H1 (cell line): ENCODE measurements at regions of chr1 and their contacts with region 1.

Region 1: GRCh38 chr1:156226116-156226538 is 13.3 kb downstream of the PMF1 start:
- DNase-seq: no peak
- H3K4me3 ChIP-seq: no peak overlapping the region
- H3K27ac ChIP-seq: no peak overlapping the region
- H3K4me1 ChIP-seq: no peaks in the 10 kb centered on the region
- H3K27me3 ChIP-seq: no peaks in the 10 kb centered on the region
- CTCF ChIP-seq: no peak
- EP300 ChIP-seq: no peak
- POLR2A ChIP-seq: no peak
- RAD21 ChIP-seq: no peak

Region 2: DNA sequence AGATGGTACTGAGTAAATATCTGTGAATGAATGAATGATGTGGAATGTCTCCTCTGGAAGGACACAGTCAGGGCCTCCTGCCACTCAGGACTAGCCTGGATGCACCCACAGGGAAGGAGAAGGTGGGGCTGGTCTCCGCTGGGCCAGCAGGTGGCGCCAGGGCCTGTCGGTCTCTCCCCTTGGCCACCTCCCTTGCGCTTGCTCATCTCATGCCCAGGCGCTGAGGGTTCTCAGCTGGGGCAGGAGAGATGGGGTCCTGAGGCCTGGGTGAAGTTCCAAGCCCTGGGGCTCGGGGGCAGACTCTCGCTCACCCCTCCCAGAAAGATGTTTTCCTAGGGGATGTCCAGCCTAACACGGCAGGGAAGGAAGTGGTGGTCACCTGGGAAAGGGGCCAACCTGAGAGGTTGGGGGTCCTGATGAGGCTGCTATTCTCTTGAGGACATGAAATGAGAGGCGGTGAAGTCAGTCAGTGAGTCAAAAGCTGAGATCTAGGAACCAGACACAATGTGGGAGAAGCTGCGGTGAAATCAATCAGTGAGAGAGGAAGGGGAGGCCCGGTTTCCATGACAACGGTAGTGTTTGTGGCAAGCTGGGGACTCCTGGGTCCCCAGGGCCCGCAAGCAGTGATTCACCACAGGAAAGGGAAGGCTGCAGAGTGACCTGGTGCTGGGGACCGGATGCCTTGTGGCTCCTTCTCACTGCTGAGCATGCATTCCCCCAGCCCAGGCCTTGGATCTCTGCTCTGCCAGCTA is 129.3 kb before region 1 on chr1:
- CTCF ChIA-PET with region 1: interaction called, 15 read pairs
- POLR2A ChIA-PET with region 1: no interaction called
- DNase-seq: peak in 1 of 2 experiments; percentile 95
- H3K4me3 ChIP-seq: no peak overlapping the region
- H3K27ac ChIP-seq: no peak overlapping the region
- H3K4me1 ChIP-seq: peaks cover 0 to 10% (median 3%) of the 10 kb centered on the region in 4 experiments; a peak in 3 of 7 replicates
- H3K27me3 ChIP-seq: no peaks in the 10 kb centered on the region; a peak in 1 of 7 replicates
- CTCF ChIP-seq: peak; percentile 94 to 100 (median 97)
- EP300 ChIP-seq: no peak
- POLR2A ChIP-seq: no peak
- RAD21 ChIP-seq: peak; percentile 93

Region 3: GRCh38 chr1:156160743-156161171 is 65.4 kb before region 1 on chr1:
- CTCF ChIA-PET with region 1: interaction called, 1,265 read pairs
- POLR2A ChIA-PET with region 1: interaction called, 3 read pairs
- DNase-seq: peak in 1 of 2 experiments; percentile 81
- H3K4me3 ChIP-seq: peak overlapping the region; percentile 32 to 68 (median 34); a peak in 7 of 8 replicates
- H3K27ac ChIP-seq: no peak overlapping the region
- H3K4me1 ChIP-seq: peaks cover 3 to 14% (median 10%) of the 10 kb centered on the region in 4 experiments; a peak in 6 of 7 replicates
- H3K27me3 ChIP-seq: no peaks in the 10 kb centered on the region
- CTCF ChIP-seq: no peak
- EP300 ChIP-seq: no peak
- POLR2A ChIP-seq: peak in 1 of 2 experiments; percentile 25; a peak in 1 of 3 replicates
- RAD21 ChIP-seq: no peak

Region 4: DNA sequence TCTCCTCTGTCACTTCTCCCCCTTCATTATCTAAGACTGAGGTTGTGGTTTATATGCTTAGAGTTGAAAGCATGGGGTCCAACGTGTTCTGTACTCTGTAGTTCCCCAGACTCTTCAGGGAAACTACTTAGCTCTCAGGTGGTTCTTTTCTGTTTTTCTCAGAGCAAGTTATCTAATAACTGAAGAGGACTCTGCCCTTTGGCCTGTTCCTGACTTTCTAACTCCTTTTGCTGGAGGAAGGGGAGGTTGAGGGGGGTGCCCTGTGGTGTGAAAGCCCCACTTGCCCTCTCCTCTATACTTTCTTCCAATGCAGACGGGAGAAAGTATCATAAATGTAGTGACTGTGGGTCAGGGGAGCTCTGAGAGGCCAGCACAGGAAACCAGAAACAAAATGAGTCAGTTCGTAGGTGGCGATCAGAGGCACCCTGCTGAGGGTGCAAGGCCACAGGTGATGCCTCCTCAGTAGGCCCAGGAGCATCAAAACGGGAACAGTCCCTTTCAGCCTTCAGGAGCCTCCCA is 27.2 kb before region 1 on chr1:
- CTCF ChIA-PET with region 1: interaction called, 41 read pairs
- POLR2A ChIA-PET with region 1: interaction called, 8 read pairs
- DNase-seq: no peak
- H3K4me3 ChIP-seq: no peak overlapping the region
- H3K27ac ChIP-seq: no peak overlapping the region
- H3K4me1 ChIP-seq: peaks cover 0 to 16% (median 3%) of the 10 kb centered on the region in 4 experiments; a peak in 4 of 7 replicates
- H3K27me3 ChIP-seq: no peaks in the 10 kb centered on the region
- CTCF ChIP-seq: no peak
- EP300 ChIP-seq: no peak
- POLR2A ChIP-seq: no peak
- RAD21 ChIP-seq: no peak

Region 5: GRCh38 chr1:156262461-156263287 is 36.5 kb after region 1 on chr1:
- CTCF ChIA-PET with region 1: interaction called, 10 read pairs
- POLR2A ChIA-PET with region 1: no interaction called
- DNase-seq: no peak
- H3K4me3 ChIP-seq: no peak overlapping the region
- H3K27ac ChIP-seq: no peak overlapping the region
- H3K4me1 ChIP-seq: no peaks in the 10 kb centered on the region
- H3K27me3 ChIP-seq: no peaks in the 10 kb centered on the region
- CTCF ChIP-seq: no peak
- EP300 ChIP-seq: no peak
- POLR2A ChIP-seq: no peak
- RAD21 ChIP-seq: no peak

Region 6: DNA sequence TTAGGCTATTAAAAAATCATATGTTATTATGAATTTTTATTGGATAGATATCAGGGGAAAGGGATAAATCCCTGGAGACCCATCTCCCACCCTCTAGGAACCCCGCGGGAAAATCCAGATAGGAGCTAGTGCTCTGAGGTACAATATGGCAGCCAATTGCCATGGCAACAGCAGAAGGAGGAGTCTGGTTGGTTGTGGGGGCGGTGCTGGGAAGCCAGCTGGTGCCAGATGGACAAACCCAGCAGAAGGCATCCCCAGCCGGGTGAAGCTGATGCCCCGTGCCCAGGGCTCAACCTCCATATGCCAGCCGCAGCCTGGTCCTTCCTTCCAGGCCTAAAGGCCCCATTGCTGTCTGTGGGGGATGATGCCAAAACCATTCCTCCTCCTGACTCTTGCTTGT is 181.2 kb after region 1 on chr1:
- CTCF ChIA-PET with region 1: no interaction called
- POLR2A ChIA-PET with region 1: no interaction called
- DNase-seq: no peak
- H3K4me3 ChIP-seq: no peak overlapping the region
- H3K27ac ChIP-seq: no peak overlapping the region
- H3K4me1 ChIP-seq: peaks cover 0 to 6% (median under 1%) of the 10 kb centered on the region in 4 experiments; a peak in 4 of 7 replicates
- H3K27me3 ChIP-seq: peaks cover 0 to 2% (median 0%) of the 10 kb centered on the region in 4 experiments; a peak in 3 of 7 replicates
- CTCF ChIP-seq: no peak
- EP300 ChIP-seq: no peak
- POLR2A ChIP-seq: no peak
- RAD21 ChIP-seq: no peak